Ascending aorta (tissue), 2 donors: ENCODE measurements at regions of chrX and their contacts with region 1.

Region 1: GRCh38 chrX:69562904-69563578 is 52.9 kb upstream of the EDA start:
- DNase-seq: no peak
- H3K4me3 ChIP-seq: no peak overlapping the region
- H3K27ac ChIP-seq: no peak overlapping the region
- H3K4me1 ChIP-seq: no peaks in the 10 kb centered on the region
- H3K27me3 ChIP-seq: no peaks in the 10 kb centered on the region
- CTCF ChIP-seq: no peak

Region 2: GRCh38 chrX:69510137-69510715 is 52.8 kb before region 1 on chrX:
- intact Hi-C with region 1: loop called (anchors 10 kb)
- DNase-seq: peak in 1 of 2 donors; percentile 46
- H3K4me3 ChIP-seq: no peak overlapping the region
- H3K27ac ChIP-seq: no peak overlapping the region
- H3K4me1 ChIP-seq: no peaks in the 10 kb centered on the region
- H3K27me3 ChIP-seq: no peaks in the 10 kb centered on the region
- CTCF ChIP-seq: no peak